Posterior vena cava (tissue), 2 donors: ENCODE measurements at regions of chr4 and their contacts with region 1.

Region 1: DNA sequence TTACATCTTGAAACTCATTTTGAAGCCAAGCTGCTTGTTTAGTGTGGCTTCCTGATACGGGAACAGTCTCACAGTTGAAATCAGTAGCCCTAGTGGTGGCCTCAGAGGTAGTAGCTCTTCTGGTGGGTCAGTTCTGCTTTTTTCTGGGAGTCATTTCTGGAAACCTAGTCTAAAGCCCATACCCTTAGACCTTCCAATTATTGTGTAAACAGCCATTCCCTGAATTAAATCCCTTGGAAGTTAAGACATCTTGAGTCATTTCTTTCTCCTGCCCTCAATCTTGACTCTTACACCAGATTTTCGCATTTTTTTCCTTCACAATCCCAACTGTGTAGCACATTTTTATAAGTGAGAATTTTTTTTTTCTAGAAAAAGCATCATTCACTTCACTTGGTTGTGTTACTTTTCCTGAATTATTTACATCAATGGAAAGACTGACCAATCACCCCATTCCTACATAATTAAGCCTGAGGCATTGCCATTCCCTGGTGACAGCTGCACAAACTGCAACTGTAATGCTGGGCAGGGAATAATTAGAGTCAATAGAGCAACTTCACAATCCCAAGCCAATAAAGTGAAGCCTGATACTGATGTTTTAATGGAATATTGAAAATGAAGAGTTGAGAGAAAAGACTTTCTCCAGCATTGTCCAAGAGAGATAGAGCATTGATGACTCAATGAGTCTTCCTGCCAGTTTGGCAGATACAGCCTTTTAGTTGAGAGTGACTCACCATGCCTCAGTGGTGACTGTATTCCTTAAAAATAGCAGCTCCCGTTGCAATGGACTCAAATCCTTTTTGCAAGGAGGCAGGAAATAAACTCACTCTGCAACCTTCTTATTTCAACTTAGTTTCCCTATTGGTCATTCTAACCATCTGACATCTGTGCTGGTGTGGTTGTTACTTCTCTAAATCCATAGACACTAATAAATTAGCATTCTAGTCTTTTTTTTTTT is 13.0 kb upstream of the SEPSECS start:
- DNase-seq: no peak

Region 2: GRCh38 chr4:25234390-25235370 is 61.4 kb after region 1 on chr4:
- intact Hi-C with region 1: loop called in 1 of 2 experiments (anchors 10 kb)
- DNase-seq: peak; percentile 84